Activated T-helper 1 cell treated with anti-CD3 and anti-CD28 coated beads, Interleukin-12 subunit alpha, Interleukin-12 subunit beta, Interleukin-2, Interleukin-4 antibody, amounts not matched to agents 30 ng/mL and 10 ng/mL and 1 ng/mL, durations not matched to agents 14 hours and 24 hours and 36 hours (primary cell): ENCODE measurements at regions of chr6 and their contacts with region 1.

Region 1: GRCh38 chr6:146850238-146850896 is 251.6 kb downstream of the ADGB start:
- DNase-seq: no peak
- H3K4me3 Mint-ChIP-seq: no peak overlapping the region
- H3K27ac Mint-ChIP-seq: peak overlapping the region; percentile 61
- H3K4me1 Mint-ChIP-seq: peaks cover 39% of the 10 kb centered on the region
- H3K27me3 Mint-ChIP-seq: no peaks in the 10 kb centered on the region

Region 2: GRCh38 chr6:145814501-145815308 is 1035.7 kb before region 1 on chr6 and contains the start of gene FBXO30:
- intact Hi-C with region 1: loop called (anchors 5 kb)
- DNase-seq: peak; percentile 83
- H3K4me3 Mint-ChIP-seq: peak within 1 kb of the TSS; percentile 90
- H3K27ac Mint-ChIP-seq: peak within 1 kb of the TSS; percentile 89
- H3K4me1 Mint-ChIP-seq: peaks cover 61% of the 10 kb centered on the region
- H3K27me3 Mint-ChIP-seq: no peaks in the 10 kb centered on the region
- total RNA-seq, gene FBXO30: 8.8 TPM in 2 replicates

Region 3: GRCh38 chr6:146827216-146827928 is 23.0 kb before region 1 on chr6:
- intact Hi-C with region 1: no loop called
- DNase-seq: no peak
- H3K4me3 Mint-ChIP-seq: no peak overlapping the region
- H3K27ac Mint-ChIP-seq: no peak overlapping the region
- H3K4me1 Mint-ChIP-seq: no peaks in the 10 kb centered on the region
- H3K27me3 Mint-ChIP-seq: no peaks in the 10 kb centered on the region

Region 4: GRCh38 chr6:146876271-146877151 is 26.1 kb after region 1 on chr6:
- intact Hi-C with region 1: loop called (anchors 1 kb)
- DNase-seq: no peak
- H3K4me3 Mint-ChIP-seq: no peak overlapping the region
- H3K27ac Mint-ChIP-seq: peak overlapping the region; percentile 32
- H3K4me1 Mint-ChIP-seq: peaks cover 20% of the 10 kb centered on the region
- H3K27me3 Mint-ChIP-seq: peaks cover 2% of the 10 kb centered on the region

Region 5: DNA sequence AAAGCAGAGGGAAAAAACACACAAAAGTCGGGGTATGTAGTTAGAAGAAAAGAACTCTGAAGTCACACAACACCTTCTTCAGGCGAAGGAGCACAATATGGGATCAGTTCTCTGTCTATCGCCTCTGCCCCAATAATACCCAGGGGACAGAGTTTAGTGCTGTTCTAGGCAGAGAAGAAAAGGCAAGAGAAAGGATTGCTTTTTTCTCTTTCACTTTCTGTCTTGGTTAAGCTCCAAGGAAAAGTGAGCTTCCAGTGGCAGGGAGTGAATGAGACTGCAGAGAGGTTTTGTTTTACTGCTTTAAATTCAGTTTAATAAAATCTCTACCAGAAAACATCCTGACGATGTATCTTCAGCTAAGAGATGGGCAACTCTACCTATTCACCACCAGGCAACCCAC is 267.2 kb after region 1 on chr6:
- intact Hi-C with region 1: no loop called
- DNase-seq: no peak
- H3K4me3 Mint-ChIP-seq: no peak overlapping the region
- H3K27ac Mint-ChIP-seq: no peak overlapping the region
- H3K4me1 Mint-ChIP-seq: no peaks in the 10 kb centered on the region
- H3K27me3 Mint-ChIP-seq: no peaks in the 10 kb centered on the region

Region 6: DNA sequence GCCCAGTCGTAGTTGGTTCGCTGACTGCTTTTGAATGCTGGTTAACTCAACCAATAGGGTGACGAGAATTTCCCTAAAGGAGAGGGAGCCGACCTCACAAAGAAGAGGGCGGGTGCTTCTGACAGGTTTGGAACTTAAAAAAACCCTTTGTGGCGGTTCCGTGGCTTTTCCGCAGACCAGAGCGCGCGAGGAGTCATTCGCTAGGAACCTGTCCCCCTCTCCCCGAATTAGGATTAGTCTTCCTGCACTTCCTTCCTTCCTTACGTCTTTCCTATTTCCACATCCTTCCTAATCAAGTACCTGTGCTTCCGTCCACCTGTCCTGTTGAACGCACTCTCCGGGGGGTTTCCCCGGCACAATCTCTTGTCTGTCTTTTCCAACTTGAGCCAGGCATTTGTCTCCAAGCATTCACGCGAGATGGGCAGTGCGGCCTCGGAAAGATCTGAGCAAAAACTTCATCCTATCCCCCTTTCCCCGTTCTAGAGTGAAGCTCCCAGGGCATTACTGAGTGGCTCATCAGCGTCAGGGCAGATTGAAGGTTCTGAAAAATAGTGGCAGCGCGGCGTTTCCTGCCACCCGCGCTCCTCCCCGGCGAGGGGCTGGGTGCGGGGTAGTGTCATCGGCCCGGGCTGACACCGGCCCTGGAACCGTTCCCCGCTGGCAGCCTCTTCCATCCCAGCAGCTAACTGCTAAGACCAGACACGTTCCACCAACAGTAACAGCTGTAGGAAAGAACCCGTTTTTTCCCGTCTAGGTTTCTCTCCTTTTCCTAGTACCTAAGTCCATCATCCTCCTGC is 352.3 kb after region 1 on chr6:
- intact Hi-C with region 1: loop called (anchors 1 kb)
- DNase-seq: peak; percentile 77
- H3K4me3 Mint-ChIP-seq: peak overlapping the region; percentile 89
- H3K27ac Mint-ChIP-seq: peak overlapping the region; percentile 98
- H3K4me1 Mint-ChIP-seq: peaks cover 39% of the 10 kb centered on the region
- H3K27me3 Mint-ChIP-seq: no peaks in the 10 kb centered on the region

Region 7: GRCh38 chr6:148760568-148761526 is 1910.5 kb after region 1 on chr6:
- intact Hi-C with region 1: loop called (anchors 5 kb)
- DNase-seq: no peak
- H3K4me3 Mint-ChIP-seq: peak overlapping the region; percentile 11
- H3K27ac Mint-ChIP-seq: peak overlapping the region; percentile 54
- H3K4me1 Mint-ChIP-seq: peaks cover 30% of the 10 kb centered on the region
- H3K27me3 Mint-ChIP-seq: peaks cover 57% of the 10 kb centered on the region